ENCODE measurements at regions of chr7 and their contacts with region 1.

Region 1: DNA sequence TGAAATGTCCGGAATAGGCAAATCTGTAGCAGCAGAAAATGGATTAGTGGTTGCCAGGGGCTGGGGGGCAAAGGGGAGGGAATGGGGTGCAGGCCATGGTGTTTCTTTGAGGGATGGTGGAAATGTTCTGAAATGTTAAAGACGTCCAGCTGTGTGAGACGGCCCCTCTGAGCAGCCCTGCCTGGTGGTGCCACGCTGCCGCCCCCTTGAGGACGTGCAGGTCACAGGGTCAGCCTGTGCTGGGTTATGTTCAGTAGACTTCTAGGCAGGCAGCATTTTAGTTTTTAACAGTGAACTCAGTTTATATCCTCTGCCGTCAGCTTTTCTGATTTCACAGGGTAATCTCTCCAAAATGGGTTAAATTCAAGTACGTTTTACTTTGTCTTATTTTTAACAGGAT is 9.4 kb downstream of the NUB1 start:
- DNase-seq: no peak
- ATAC-seq: peak; percentile 39

Region 2: DNA sequence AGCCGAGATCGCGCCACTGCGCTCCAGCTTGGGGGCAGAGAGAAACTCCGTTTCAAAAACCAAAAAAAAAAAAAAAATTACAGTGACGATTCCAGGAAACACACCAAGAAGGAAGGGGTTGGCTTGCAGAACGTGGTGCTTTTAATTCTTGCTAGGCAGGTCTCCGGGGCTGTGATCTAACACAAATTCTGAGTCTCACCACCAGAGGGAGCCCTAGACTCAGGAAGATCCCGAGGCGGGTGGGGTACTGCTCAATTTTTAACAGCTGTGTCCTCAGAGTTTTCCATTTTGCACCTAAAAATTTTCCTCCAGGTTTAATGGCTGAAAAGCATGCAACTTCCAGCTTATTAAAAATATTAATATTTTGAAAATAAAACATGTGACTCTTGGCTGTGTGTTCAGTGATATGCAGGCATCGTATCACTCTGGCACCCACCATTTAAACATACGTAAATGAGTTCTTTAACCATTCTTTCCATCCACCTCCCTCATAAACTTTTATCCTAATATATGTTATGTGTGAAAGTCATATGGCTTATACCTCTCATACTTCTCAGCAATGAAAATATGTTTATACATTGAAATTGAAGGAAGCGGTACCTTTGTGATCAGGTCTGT is 35.9 kb before region 1 on chr7:
- intact Hi-C with region 1: loop called (anchors 1 kb)
- DNase-seq: no peak
- ATAC-seq: peak; percentile 79

Region 3: GRCh38 chr7:151917791-151918509 is 566.9 kb after region 1 on chr7:
- intact Hi-C with region 1: no loop called
- DNase-seq: no peak
- ATAC-seq: peak; percentile 47